Activated B cell treated with CpG ODN at 0.5 μM for 24 hours (primary cell): ENCODE measurements at regions of chrX and their contacts with region 1.

Region 1: GRCh38 chrX:10615931-10616775 is 4.2 kb downstream of the MID1 start:
- DNase-seq: no peak
- ATAC-seq: peak; percentile 57
- H3K4me3 Mint-ChIP-seq: no peak overlapping the region
- H3K27ac Mint-ChIP-seq: no peak overlapping the region
- H3K4me1 Mint-ChIP-seq: peaks cover 15% of the 10 kb centered on the region
- H3K27me3 Mint-ChIP-seq: peaks cover 18% of the 10 kb centered on the region
- CTCF ChIP-seq: no peak

Region 2: GRCh38 chrX:9988762-9989161 is 627.4 kb before region 1 on chrX:
- CTCF ChIA-PET with region 1: no interaction called
- POLR2A ChIA-PET with region 1: no interaction called
- intact Hi-C with region 1: loop called (anchors 10 kb)
- DNase-seq: no peak
- ATAC-seq: no peak
- H3K4me3 Mint-ChIP-seq: no peak overlapping the region
- H3K27ac Mint-ChIP-seq: no peak overlapping the region
- H3K4me1 Mint-ChIP-seq: peaks cover 17% of the 10 kb centered on the region
- H3K27me3 Mint-ChIP-seq: no peaks in the 10 kb centered on the region
- CTCF ChIP-seq: no peak

Region 3: DNA sequence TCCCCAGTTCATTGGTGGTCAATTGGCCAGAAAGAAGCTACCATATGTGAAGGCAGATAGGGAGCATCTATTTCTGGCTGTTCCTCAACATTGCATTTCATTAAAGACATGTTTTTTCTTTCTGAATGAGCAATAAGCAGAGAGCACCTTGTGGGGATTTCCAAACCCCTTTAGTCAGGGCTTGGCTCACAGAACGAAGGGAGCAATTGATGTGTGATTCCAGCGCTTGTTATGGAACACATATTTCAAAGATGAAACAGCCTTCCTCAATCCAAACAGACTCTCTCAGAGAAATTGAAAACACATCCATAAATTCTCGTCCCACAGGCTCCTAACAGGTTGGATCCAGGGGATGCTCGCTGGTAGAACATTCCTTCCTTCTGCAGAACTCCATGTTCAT is 375.2 kb before region 1 on chrX:
- CTCF ChIA-PET with region 1: no interaction called
- POLR2A ChIA-PET with region 1: no interaction called
- intact Hi-C with region 1: no loop called
- DNase-seq: no peak
- ATAC-seq: no peak
- H3K4me3 Mint-ChIP-seq: no peak overlapping the region
- H3K27ac Mint-ChIP-seq: no peak overlapping the region
- H3K4me1 Mint-ChIP-seq: no peaks in the 10 kb centered on the region
- H3K27me3 Mint-ChIP-seq: no peaks in the 10 kb centered on the region
- CTCF ChIP-seq: no peak